ENCODE measurements at regions of chr10 and their contacts with region 1.

Region 1: GRCh38 chr10:28807760-28808613 is 130.7 kb downstream of the BAMBI start:
- DNase-seq: no peak
- H3K4me3 ChIP-seq: peak overlapping the region; percentile 31 to 47
- H3K27ac ChIP-seq: peak overlapping the region; percentile 84 to 89
- H3K4me1 ChIP-seq: peaks cover 3 to 25% of the 10 kb centered on the region in 2 donors
- H3K27me3 ChIP-seq: no peaks in the 10 kb centered on the region
- CTCF ChIP-seq: no peak

Region 2: GRCh38 chr10:28839600-28840007 is 31.6 kb after region 1 on chr10:
- intact Hi-C with region 1: loop called (anchors 5 kb)
- DNase-seq: no peak
- H3K4me3 ChIP-seq: no peak overlapping the region
- H3K27ac ChIP-seq: peak overlapping the region in 1 of 2 donors; percentile 31
- H3K4me1 ChIP-seq: peaks cover 0 to 5% of the 10 kb centered on the region in 2 donors
- H3K27me3 ChIP-seq: no peaks in the 10 kb centered on the region
- CTCF ChIP-seq: no peak

Region 3: GRCh38 chr10:28959850-28960501 is 152.0 kb after region 1 on chr10:
- intact Hi-C with region 1: no loop called
- DNase-seq: no peak
- H3K4me3 ChIP-seq: no peak overlapping the region
- H3K27ac ChIP-seq: no peak overlapping the region
- H3K4me1 ChIP-seq: no peaks in the 10 kb centered on the region
- H3K27me3 ChIP-seq: no peaks in the 10 kb centered on the region
- CTCF ChIP-seq: no peak

Measured in ascending aorta (tissue), 2 donors.